ENCODE measurements at regions of chr19 and their contacts with region 1.

Region 1: GRCh38 chr19:3821857-3822364 is 35.7 kb upstream of the MATK start:
- DNase-seq: peak; percentile 88
- ATAC-seq: peak; percentile 58

Region 2: GRCh38 chr19:3762501-3763459 is 59.1 kb before region 1 on chr19 and contains the start of gene MRPL54:
- intact Hi-C with region 1: loop called (anchors 5 kb)
- DNase-seq: peak; percentile 100
- ATAC-seq: peak; percentile 97
- total RNA-seq, gene MRPL54: 73.8 TPM